ENCODE measurements at regions of chr10 and their contacts with region 1.

Region 1: GRCh38 chr10:35400595-35401268 is 64.4 kb downstream of the CCNY start:
- DNase-seq: no peak
- H3K4me3 ChIP-seq: no peak overlapping the region
- H3K27ac ChIP-seq: no peak overlapping the region
- H3K4me1 ChIP-seq: peaks cover 54% of the 10 kb centered on the region
- H3K27me3 ChIP-seq: no peaks in the 10 kb centered on the region
- CTCF ChIP-seq: no peak

Region 2: GRCh38 chr10:35421553-35422178 is 20.9 kb after region 1 on chr10:
- CTCF ChIA-PET with region 1: no interaction called
- POLR2A ChIA-PET with region 1: no interaction called
- intact Hi-C with region 1: loop called (anchors 2 kb)
- DNase-seq: no peak
- H3K4me3 ChIP-seq: no peak overlapping the region
- H3K27ac ChIP-seq: peak overlapping the region; percentile 12
- H3K4me1 ChIP-seq: peaks cover 48% of the 10 kb centered on the region
- H3K27me3 ChIP-seq: no peaks in the 10 kb centered on the region
- CTCF ChIP-seq: no peak

Region 3: DNA sequence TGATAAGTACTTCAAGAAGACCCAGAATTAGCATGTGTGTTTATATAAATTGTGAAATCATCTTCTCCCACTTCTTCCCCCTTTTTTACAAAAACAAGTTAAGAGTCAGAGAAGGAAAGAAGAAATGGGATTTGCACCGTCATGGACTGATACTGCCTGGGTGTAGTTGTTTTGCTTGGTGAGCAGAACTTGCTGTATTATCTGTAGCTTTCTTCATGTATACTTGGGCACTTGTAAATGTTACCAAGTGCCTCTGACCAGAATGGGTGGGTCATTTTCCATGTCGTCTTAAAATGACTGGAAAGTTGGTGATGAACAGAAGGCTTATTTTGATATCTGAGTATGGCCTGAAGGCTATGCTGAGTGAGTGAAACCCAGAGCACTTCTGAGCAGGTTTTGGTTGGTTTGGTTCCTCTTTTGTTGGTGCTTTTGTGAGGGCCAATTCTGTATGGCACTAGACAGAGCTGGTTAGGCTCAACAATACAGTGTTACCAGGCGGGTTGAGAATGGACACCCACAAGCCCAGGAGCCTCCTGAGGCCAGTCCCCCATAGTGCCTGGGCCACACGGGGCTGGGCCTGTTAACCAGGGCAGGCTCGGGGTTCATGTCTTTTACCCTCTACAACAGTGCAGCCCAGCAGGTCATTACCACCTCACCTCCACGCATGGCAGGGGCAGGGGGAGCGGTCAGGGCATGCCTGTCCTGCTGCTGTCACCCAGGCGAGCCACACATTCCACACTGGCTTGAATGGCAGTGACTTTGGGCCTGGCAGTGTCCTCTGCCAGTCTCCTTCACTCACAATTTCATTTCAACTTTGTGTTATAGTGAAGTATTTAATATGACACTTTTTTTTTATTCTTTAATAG is 50.7 kb after region 1 on chr10:
- CTCF ChIA-PET with region 1: no interaction called
- POLR2A ChIA-PET with region 1: no interaction called
- intact Hi-C with region 1: no loop called
- DNase-seq: no peak
- H3K4me3 ChIP-seq: no peak overlapping the region
- H3K27ac ChIP-seq: peak overlapping the region; percentile 44
- H3K4me1 ChIP-seq: peaks cover 76% of the 10 kb centered on the region
- H3K27me3 ChIP-seq: no peaks in the 10 kb centered on the region
- CTCF ChIP-seq: no peak

Measured in A673 (cell line).